GM12878 (cell line): ENCODE measurements at regions of chrX and their contacts with region 1.

Region 1: GRCh38 chrX:112760697-112761096 is 79.9 kb downstream of the AMOT start:
- DNase-seq: peak; percentile 20
- ATAC-seq: peak; percentile 60
- H3K4me3 ChIP-seq: no peak overlapping the region
- H3K27ac ChIP-seq: peak overlapping the region; percentile 34; the same call in 1 of the 2 replicates
- H3K4me1 ChIP-seq: no peaks in the 10 kb centered on the region
- H3K27me3 ChIP-seq: no peaks in the 10 kb centered on the region
- CTCF ChIP-seq: peak in 2 of 3 experiments; percentile 27 to 31; a peak in 3 of 6 replicates
- EP300 ChIP-seq: no peak
- POLR2A ChIP-seq: no peak
- RAD21 ChIP-seq: peak; percentile 49

Region 2: DNA sequence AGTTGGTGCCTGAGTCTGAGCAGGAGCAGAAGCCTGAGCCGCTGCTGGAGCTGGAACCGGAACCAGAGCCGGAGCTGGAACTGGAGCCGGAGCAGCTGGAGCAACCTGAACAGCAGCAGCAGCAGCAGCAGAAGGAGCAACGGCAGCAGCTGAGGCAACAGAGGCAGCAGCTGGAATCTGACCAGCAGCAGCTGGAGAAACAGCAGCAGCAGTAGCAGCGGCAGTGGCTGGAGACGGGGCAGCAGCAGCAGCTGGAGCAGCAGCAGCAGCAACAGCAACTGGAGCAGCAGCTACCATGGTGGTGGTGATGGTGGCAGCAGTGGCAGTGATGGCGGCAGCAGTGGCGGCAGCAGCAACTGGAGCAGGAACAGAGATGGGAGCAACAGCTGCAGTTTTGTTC is 18.4 kb after region 1 on chrX:
- CTCF ChIA-PET with region 1: no interaction called
- POLR2A ChIA-PET with region 1: no interaction called
- RAD21 ChIA-PET with region 1: no interaction called
- SMC1A ChIA-PET with region 1: no interaction called
- in situ Hi-C with region 1: no loop called
- intact Hi-C with region 1: no loop called
- DNase-seq: no peak
- ATAC-seq: no peak
- H3K4me3 ChIP-seq: no peak overlapping the region
- H3K27ac ChIP-seq: no peak overlapping the region
- H3K4me1 ChIP-seq: no peaks in the 10 kb centered on the region
- H3K27me3 ChIP-seq: no peaks in the 10 kb centered on the region
- CTCF ChIP-seq: no peak
- EP300 ChIP-seq: no peak
- POLR2A ChIP-seq: no peak
- RAD21 ChIP-seq: no peak

Region 3: GRCh38 chrX:112808646-112809195 is 48.0 kb after region 1 on chrX:
- CTCF ChIA-PET with region 1: no interaction called
- POLR2A ChIA-PET with region 1: no interaction called
- RAD21 ChIA-PET with region 1: no interaction called
- SMC1A ChIA-PET with region 1: no interaction called
- in situ Hi-C with region 1: no loop called
- intact Hi-C with region 1: no loop called
- DNase-seq: no peak
- ATAC-seq: no peak
- H3K4me3 ChIP-seq: no peak overlapping the region
- H3K27ac ChIP-seq: no peak overlapping the region
- H3K4me1 ChIP-seq: no peaks in the 10 kb centered on the region
- H3K27me3 ChIP-seq: no peaks in the 10 kb centered on the region
- CTCF ChIP-seq: no peak
- EP300 ChIP-seq: no peak
- POLR2A ChIP-seq: no peak
- RAD21 ChIP-seq: no peak

Region 4: DNA sequence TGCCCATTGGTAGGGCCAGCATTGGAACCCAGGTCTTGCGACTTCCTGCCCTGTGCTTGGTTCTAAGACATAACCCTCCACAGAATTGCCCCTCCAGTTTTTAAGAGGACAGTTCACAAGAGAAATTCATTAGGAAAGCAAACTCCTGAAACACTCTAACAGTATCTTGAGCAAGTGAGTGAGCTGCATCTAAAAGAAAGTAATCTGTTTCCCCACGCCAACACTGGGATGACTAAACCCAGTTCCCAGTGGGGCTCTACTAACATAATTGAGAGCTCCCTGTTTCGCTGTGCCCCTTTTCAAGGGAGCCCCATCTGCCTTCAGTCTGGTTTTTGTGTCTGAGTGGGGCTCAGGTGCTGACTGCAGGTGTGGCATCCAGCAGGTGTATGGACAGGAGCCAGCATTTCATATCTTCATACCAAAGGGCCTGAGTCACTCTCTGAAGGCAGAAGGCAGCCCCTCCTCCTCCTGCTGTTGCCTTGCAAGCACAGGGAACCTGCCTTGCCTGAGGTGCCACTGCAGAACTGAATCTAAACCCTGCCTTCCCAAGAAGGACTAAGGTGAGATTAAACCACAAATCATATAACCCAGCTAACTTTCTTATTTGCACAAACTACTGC is 71.9 kb after region 1 on chrX:
- CTCF ChIA-PET with region 1: no interaction called
- POLR2A ChIA-PET with region 1: no interaction called
- RAD21 ChIA-PET with region 1: no interaction called
- SMC1A ChIA-PET with region 1: no interaction called
- in situ Hi-C with region 1: no loop called
- intact Hi-C with region 1: loop called (anchors 10 kb)
- DNase-seq: no peak
- ATAC-seq: no peak; the same call in 2 of the 3 replicates
- H3K4me3 ChIP-seq: no peak overlapping the region
- H3K27ac ChIP-seq: no peak overlapping the region
- H3K4me1 ChIP-seq: 0 out of 2 replicates have a peak, but pooled peaks cover 3% of the 10 kb centered on the region
- H3K27me3 ChIP-seq: no peaks in the 10 kb centered on the region
- CTCF ChIP-seq: no peak
- EP300 ChIP-seq: no peak
- POLR2A ChIP-seq: no peak
- RAD21 ChIP-seq: no peak

Region 5: DNA sequence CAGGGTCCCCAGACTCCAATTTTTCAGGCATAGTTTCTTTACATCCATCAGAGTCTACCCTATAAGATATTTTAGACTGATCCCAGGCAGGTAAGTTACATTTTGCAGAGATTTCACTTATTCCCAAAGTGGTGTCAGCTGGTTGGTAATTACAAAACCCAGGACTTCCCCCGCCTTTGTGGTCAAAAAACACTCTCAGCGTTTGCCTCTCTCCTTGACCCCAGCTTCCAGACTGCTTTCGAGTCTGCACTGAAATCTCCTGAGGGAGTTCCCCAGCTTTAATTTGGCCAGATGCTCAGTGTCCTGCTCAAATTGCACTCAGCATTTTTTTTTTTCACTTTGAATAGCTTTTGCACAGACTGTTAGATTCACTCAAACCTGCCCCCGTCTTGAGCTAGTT is 91.1 kb after region 1 on chrX:
- CTCF ChIA-PET with region 1: no interaction called
- POLR2A ChIA-PET with region 1: no interaction called
- RAD21 ChIA-PET with region 1: no interaction called
- SMC1A ChIA-PET with region 1: interaction called, 3 read pairs
- in situ Hi-C with region 1: no loop called
- intact Hi-C with region 1: loop called (anchors 1 kb)
- DNase-seq: peak; percentile 63
- ATAC-seq: peak; percentile 79
- H3K4me3 ChIP-seq: peak overlapping the region; percentile 32; the same call in 1 of the 2 replicates
- H3K27ac ChIP-seq: peak overlapping the region; percentile 61; the same call in 1 of the 2 replicates
- H3K4me1 ChIP-seq: peaks cover 17% of the 10 kb centered on the region
- H3K27me3 ChIP-seq: no peaks in the 10 kb centered on the region
- CTCF ChIP-seq: no peak
- EP300 ChIP-seq: no peak
- POLR2A ChIP-seq: no peak
- RAD21 ChIP-seq: no peak

Region 6: DNA sequence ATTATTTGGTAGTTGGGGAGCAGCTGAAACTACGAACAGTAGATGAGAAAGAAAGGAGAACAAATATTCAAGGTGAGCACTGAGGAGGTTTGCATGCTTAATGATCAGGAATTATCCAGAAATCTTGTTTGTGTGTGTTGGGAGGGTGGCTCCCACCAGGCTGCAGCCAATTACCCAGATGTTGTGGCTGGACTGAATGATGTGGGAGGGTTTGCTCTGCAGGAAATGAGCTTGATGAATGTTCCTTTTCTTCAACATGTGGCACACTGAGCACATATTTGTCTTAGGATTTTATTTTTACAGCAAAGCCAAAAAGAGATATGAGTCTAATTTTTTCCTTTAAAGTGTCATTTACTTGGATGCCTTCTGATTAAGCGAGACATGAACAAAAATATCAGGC is 128.2 kb after region 1 on chrX:
- CTCF ChIA-PET with region 1: no interaction called
- POLR2A ChIA-PET with region 1: no interaction called
- RAD21 ChIA-PET with region 1: no interaction called
- SMC1A ChIA-PET with region 1: no interaction called
- in situ Hi-C with region 1: no loop called
- intact Hi-C with region 1: no loop called
- DNase-seq: no peak
- ATAC-seq: no peak
- H3K4me3 ChIP-seq: no peak overlapping the region
- H3K27ac ChIP-seq: no peak overlapping the region
- H3K4me1 ChIP-seq: no peaks in the 10 kb centered on the region
- H3K27me3 ChIP-seq: no peaks in the 10 kb centered on the region; a peak in 1 of 4 replicates
- CTCF ChIP-seq: no peak
- EP300 ChIP-seq: no peak
- POLR2A ChIP-seq: no peak
- RAD21 ChIP-seq: no peak

Region 7: DNA sequence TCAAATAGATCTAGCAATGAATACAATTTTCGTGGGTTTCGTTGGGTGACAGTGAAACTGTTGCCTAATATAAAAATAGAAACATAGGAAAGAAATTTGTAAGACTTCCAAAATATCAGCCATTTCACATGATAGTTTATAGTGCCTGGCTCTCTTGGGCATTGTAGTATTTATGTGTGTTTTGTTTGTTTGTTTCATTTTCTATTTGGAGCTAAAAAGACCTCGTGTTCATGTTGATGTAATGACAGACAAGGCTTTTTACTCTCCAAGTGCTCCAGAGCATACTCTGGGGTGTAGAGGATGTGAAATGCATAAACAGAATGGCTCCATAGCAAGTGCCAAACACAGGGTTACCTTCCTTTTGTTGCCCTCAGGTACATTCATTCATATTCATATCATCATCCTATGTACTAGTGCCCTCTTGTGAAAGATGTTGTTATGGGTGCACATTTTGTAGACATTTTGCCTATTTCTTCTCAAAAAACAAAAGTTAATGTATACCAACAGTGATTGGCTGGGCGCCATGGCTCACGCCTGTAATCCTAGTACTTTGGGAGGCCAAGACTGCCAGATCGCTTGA is 180.6 kb after region 1 on chrX:
- CTCF ChIA-PET with region 1: interaction called, 3 read pairs
- POLR2A ChIA-PET with region 1: no interaction called
- RAD21 ChIA-PET with region 1: no interaction called
- SMC1A ChIA-PET with region 1: no interaction called
- in situ Hi-C with region 1: no loop called
- intact Hi-C with region 1: loop called (anchors 1 kb)
- DNase-seq: peak; percentile 32
- ATAC-seq: peak; percentile 85
- H3K4me3 ChIP-seq: no peak overlapping the region
- H3K27ac ChIP-seq: no peak overlapping the region
- H3K4me1 ChIP-seq: no peaks in the 10 kb centered on the region
- H3K27me3 ChIP-seq: no peaks in the 10 kb centered on the region
- CTCF ChIP-seq: peak in 2 of 3 experiments; percentile 33 to 36; a peak in 2 of 6 replicates
- EP300 ChIP-seq: no peak
- POLR2A ChIP-seq: no peak
- RAD21 ChIP-seq: peak; percentile 57